ENCODE measurements at regions of chr15 and their contacts with region 1.

Region 1: DNA sequence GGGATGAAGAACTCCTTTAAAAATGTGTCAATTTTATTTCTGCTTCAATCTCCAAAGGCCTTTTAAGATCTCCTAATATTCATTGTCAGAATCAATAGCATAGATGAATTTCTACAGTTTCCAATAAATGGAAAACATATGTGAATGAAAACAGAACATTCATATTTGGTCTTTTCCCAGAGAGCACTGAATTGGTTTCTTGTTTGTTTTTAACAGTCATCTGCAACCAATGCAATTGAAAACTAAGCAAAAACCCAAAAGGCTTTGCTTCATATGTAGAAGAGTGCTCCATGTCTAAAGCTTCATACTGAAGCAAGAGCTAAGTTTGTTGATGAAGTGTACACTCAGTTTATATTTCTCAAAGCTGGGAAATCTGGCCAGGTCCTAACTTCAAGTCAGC is 426.5 kb upstream of the CDIN1 start:
- DNase-seq: no peak

Region 2: DNA sequence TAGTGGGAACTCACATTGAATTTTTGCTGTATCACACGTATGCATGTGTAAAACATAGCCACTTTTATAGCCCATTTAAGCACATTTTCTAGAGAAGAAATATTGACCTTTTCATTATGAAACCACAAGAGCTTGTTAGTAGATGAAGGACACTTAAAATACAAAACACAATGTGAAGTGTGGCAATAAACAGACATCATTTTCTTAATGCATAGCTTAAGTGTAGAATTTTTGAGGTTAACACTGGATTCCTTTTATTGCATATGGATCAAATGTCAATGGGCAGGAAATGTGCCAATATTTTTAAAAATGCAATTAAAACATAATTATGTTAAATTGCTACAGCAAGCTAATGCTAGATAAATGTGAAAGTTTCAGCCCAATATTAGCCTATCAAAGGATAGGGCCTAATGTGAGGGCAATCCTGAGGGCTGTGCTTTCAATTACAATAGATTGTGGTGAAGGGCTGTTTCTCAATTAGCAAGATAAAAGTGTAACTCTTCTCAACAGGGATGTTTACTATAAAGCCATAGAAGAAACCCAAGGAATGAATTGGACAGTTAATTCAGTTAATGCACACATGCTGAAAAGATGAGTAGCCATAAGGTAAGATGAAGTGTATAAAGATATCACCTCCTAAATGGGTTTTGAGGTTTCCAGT is 62.5 kb before region 1 on chr15:
- intact Hi-C with region 1: no loop called
- DNase-seq: no peak

Region 3: GRCh38 chr15:36136049-36136448 is 16.9 kb before region 1 on chr15:
- intact Hi-C with region 1: loop called in 1 of 2 experiments (anchors 1 kb)
- DNase-seq: no peak

Region 4: DNA sequence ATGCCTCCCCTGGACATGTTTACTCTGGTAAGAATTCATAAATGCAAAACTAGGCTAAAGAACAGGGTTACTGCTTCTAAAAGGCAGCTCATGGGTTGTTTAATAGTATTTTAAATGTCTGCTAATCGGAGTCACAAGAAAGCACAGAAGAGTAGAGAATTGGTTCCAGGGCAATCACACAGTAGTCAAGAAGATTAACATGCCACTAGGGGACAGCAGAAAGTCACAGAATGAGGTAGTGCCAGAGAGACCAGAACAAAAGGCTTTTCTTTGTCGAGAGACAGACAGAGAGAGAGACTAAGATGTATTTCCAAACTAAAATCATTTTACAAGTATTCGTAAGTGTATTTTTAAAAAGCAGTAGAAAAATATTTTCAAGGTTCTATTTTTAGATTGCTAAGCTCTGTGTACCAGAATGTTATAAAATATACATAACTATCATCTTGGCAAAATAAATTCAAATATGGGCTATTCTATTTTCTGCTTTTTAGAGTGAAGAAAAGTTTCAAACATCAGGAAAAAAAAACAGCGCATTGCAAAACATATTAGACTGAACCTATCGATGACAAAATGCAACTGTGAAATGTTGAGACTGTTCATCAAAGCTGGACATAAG is 348.2 kb after region 1 on chr15:
- intact Hi-C with region 1: no loop called
- DNase-seq: no peak